Caco-2 (cell line): ENCODE measurements at regions of chr11 and their contacts with region 1.

Region 1: DNA sequence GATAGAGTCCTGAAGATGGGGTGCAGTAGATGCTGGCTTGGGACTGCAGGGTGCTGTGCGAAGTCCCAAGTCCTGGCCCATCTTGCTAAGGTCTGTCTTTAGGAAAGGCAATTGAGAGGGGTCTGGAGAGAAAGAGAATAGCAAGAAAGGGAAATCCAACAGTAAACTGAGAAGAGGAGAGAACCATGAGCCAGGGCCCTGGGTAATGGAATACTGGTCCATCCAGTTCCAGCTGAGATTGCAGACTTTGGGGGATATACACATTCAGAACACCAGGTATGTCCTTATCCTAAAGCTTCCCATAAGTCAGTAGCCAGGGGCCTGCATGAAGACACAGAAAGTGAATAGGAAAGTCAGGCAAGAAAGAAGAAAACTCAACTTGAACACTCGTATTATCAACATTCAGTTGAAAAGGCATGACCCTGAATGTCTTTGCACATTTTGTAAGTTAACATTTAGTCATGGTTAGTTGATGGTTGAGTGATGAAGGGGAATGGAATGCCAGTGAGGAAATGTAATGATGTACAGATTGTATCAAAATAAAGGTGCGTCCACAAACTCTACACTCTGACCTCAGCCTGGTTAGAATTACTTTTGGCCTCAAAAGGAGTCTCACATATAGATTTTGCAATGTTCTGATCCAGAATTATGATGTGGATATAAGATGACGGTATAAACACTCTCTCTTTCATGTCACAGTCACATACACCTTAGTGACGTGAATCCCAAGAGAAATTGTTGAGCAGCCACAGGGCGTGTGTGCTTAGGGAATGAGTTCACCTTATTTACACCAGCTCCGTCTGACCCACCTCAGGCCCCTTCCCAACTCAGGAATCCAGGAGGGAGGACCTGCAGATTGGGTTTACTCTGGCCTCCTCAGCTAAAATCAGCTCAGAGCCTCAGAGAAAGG is 100.3 kb downstream of the RDX start:
- DNase-seq: peak; percentile 51 to 70
- H3K4me3 ChIP-seq: no peak overlapping the region
- H3K4me3 Mint-ChIP-seq: no peak overlapping the region
- H3K27ac Mint-ChIP-seq: peak overlapping the region; percentile 23
- H3K4me1 ChIP-seq: peaks cover 21% of the 10 kb centered on the region
- H3K4me1 Mint-ChIP-seq: peaks cover 29% of the 10 kb centered on the region
- H3K27me3 ChIP-seq: no peaks in the 10 kb centered on the region
- H3K27me3 Mint-ChIP-seq: no peaks in the 10 kb centered on the region
- CTCF ChIP-seq: no peak

Region 2: DNA sequence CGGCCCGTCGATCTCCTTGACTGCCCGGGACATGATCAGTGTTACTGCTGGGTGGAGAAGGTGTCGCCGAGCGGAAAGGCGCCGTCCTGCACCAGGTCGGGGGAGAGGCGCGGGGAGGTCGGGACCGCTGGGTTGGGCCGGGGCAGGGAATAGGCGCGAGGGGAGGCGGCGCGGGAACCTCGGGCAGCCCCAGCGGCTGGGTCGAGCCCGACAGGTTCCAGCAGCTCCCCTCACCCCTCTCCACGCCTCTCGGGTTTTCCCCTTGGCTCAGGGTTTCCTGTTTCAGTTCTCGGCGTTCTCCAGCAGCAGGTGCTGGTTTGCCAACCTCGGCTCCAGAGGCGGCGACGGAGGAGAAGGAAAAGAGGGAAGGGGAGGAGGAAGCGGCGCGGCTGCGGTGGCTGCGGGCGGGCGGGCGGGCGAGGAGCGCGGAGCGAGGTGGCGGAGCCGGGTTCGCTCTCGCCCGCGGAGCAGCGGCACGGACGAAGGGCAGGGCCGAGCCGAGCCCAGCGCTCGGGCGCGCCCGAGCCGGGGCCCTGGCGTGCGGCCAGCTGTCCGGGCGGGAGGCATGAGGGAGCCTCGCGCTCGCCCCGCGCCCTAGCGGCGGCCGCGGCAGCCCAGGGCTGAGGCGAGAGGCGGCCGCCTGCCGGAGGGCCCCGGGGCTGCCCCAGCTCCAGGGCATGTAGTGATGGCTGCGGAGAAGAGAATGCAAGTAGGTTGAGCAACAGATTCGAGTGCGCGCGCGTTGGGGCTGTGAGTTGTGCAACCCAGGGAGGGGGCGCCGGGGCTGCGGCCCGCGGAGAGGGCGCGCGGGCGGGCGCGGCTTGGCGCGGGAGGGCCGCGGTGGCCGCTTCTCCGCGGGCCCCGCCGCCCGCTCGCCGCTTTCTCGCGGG is 103.3 kb before region 1 on chr11 and contains the start of gene ZC3H12C:
- CTCF ChIA-PET with region 1: no interaction called
- POLR2A ChIA-PET with region 1: no interaction called
- intact Hi-C with region 1: loop called (anchors 1 kb)
- DNase-seq: peak; percentile 97
- H3K4me3 ChIP-seq: peak within 1 kb of the TSS; percentile 79
- H3K4me3 Mint-ChIP-seq: peak within 1 kb of the TSS; percentile 95
- H3K27ac Mint-ChIP-seq: peak within 1 kb of the TSS; percentile 94
- H3K4me1 ChIP-seq: peaks cover 17% of the 10 kb centered on the region
- H3K4me1 Mint-ChIP-seq: peaks cover 6% of the 10 kb centered on the region
- H3K27me3 ChIP-seq: 0 out of 2 replicates have a peak, but pooled peaks cover 1% of the 10 kb centered on the region
- H3K27me3 Mint-ChIP-seq: no peaks in the 10 kb centered on the region
- CTCF ChIP-seq: peak in 1 of 2 experiments; percentile 73
- total RNA-seq, gene ZC3H12C: 11.4 and 11.7 TPM in 2 replicates

Region 3: GRCh38 chr11:110296226-110297075 is 100.4 kb after region 1 on chr11 and contains the start of gene RDX:
- CTCF ChIA-PET with region 1: no interaction called
- POLR2A ChIA-PET with region 1: no interaction called
- intact Hi-C with region 1: loop called (anchors 1 kb)
- DNase-seq: peak; percentile 88 to 91
- H3K4me3 ChIP-seq: peak within 1 kb of the TSS; percentile 98
- H3K4me3 Mint-ChIP-seq: peak within 1 kb of the TSS; percentile 91
- H3K27ac Mint-ChIP-seq: peak within 1 kb of the TSS; percentile 98
- H3K4me1 ChIP-seq: peaks cover 51% of the 10 kb centered on the region
- H3K4me1 Mint-ChIP-seq: peaks cover 62% of the 10 kb centered on the region
- H3K27me3 ChIP-seq: no peaks in the 10 kb centered on the region
- H3K27me3 Mint-ChIP-seq: no peaks in the 10 kb centered on the region
- CTCF ChIP-seq: peak in 1 of 2 experiments; percentile 24
- total RNA-seq, gene RDX: 250 and 251 TPM in 2 replicates

Region 4: GRCh38 chr11:110319501-110319900 is 123.4 kb after region 1 on chr11:
- CTCF ChIA-PET with region 1: no interaction called
- POLR2A ChIA-PET with region 1: no interaction called
- intact Hi-C with region 1: no loop called
- DNase-seq: no peak
- H3K4me3 ChIP-seq: no peak overlapping the region
- H3K4me3 Mint-ChIP-seq: no peak overlapping the region
- H3K27ac Mint-ChIP-seq: no peak overlapping the region
- H3K4me1 ChIP-seq: peaks cover 31% of the 10 kb centered on the region
- H3K4me1 Mint-ChIP-seq: peaks cover 31% of the 10 kb centered on the region
- H3K27me3 ChIP-seq: no peaks in the 10 kb centered on the region
- H3K27me3 Mint-ChIP-seq: no peaks in the 10 kb centered on the region
- CTCF ChIP-seq: no peak

Region 5: DNA sequence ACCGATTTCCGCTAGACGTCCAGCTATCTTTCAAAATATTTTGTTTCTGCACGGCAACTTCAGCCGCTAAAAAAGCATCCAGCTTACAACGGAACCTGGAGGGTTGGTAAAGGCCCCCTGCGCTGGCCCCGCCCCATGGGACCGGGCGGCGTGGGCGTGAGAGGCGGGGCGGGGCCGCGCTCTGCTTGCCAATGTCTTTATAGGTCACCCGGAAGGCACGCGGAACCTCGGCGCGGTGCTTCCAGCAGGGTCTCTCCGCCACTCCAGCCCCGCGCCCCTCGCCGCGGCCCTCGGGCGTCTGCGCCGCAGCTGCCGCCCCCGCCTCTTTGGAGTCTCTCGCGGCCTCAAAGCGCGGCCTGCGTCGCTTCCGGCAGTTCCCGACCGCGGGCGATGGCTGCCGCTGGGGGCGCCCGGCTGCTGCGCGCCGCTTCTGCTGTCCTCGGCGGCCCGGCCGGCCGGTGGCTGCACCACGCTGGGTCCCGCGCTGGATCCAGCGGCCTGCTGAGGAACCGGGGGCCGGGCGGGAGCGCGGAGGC is 233.7 kb after region 1 on chr11 and contains the start of gene FDX1:
- CTCF ChIA-PET with region 1: interaction called, 27 read pairs
- POLR2A ChIA-PET with region 1: interaction called, 3 read pairs
- intact Hi-C with region 1: loop called (anchors 1 kb)
- DNase-seq: peak; percentile 93 to 96
- H3K4me3 ChIP-seq: peak within 1 kb of the TSS; percentile 61
- H3K4me3 Mint-ChIP-seq: peak within 1 kb of the TSS; percentile 100
- H3K27ac Mint-ChIP-seq: peak within 1 kb of the TSS; percentile 99
- H3K4me1 ChIP-seq: peaks cover 38% of the 10 kb centered on the region
- H3K4me1 Mint-ChIP-seq: peaks cover 51% of the 10 kb centered on the region
- H3K27me3 ChIP-seq: no peaks in the 10 kb centered on the region
- H3K27me3 Mint-ChIP-seq: no peaks in the 10 kb centered on the region
- CTCF ChIP-seq: peak; percentile 42 to 62
- total RNA-seq, gene FDX1: 29.5 and 29.9 TPM in 2 replicates

Region 6: GRCh38 chr11:110565357-110566336 is 369.5 kb after region 1 on chr11:
- CTCF ChIA-PET with region 1: no interaction called
- POLR2A ChIA-PET with region 1: no interaction called
- intact Hi-C with region 1: loop called (anchors 10 kb)
- DNase-seq: peak; percentile 91 to 93
- H3K4me3 ChIP-seq: no peak overlapping the region
- H3K4me3 Mint-ChIP-seq: peak overlapping the region; percentile 28
- H3K27ac Mint-ChIP-seq: peak overlapping the region; percentile 25
- H3K4me1 ChIP-seq: peaks cover 20% of the 10 kb centered on the region
- H3K4me1 Mint-ChIP-seq: peaks cover 22% of the 10 kb centered on the region
- H3K27me3 ChIP-seq: no peaks in the 10 kb centered on the region; the same call in 1 of the 2 replicates
- H3K27me3 Mint-ChIP-seq: peaks cover 9% of the 10 kb centered on the region
- CTCF ChIP-seq: no peak